ENCODE measurements at regions of chr19 and their contacts with region 1.

Region 1: GRCh38 chr19:17841810-17842662 is 5.7 kb downstream of the JAK3 start:
- DNase-seq: peak; percentile 99
- ATAC-seq: peak; percentile 92
- H3K4me3 Mint-ChIP-seq: peak overlapping the region; percentile 87
- H3K27ac Mint-ChIP-seq: no peak overlapping the region
- H3K4me1 Mint-ChIP-seq: peaks cover 4% of the 10 kb centered on the region
- H3K27me3 Mint-ChIP-seq: peaks cover 63% of the 10 kb centered on the region
- CTCF ChIP-seq: no peak

Region 2: DNA sequence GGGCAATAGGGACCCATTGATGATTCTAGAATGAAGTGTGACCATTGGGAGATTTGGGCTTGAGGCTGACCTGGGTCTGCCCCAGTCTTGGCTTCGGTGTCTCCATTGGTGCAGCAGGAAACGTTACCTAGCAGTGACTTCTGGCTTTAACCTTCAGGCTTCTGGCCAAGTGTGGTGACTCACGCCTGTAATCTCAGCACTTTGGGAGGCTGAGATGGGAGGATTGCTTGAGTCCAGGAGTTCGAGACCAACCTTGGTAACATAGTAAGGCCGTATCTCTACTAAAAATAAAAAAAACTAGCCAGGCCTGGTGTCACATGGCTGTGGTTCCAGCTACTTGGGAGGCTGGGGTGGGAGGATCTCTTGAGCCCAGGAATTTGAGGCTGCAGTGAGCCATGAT is 83.5 kb before region 1 on chr19:
- CTCF ChIA-PET with region 1: no interaction called
- POLR2A ChIA-PET with region 1: no interaction called
- DNase-seq: no peak
- ATAC-seq: no peak
- H3K4me3 Mint-ChIP-seq: no peak overlapping the region
- H3K27ac Mint-ChIP-seq: no peak overlapping the region
- H3K4me1 Mint-ChIP-seq: peaks cover 23% of the 10 kb centered on the region
- H3K27me3 Mint-ChIP-seq: no peaks in the 10 kb centered on the region; the same call in 1 of the 2 replicates
- CTCF ChIP-seq: no peak

Region 3: DNA sequence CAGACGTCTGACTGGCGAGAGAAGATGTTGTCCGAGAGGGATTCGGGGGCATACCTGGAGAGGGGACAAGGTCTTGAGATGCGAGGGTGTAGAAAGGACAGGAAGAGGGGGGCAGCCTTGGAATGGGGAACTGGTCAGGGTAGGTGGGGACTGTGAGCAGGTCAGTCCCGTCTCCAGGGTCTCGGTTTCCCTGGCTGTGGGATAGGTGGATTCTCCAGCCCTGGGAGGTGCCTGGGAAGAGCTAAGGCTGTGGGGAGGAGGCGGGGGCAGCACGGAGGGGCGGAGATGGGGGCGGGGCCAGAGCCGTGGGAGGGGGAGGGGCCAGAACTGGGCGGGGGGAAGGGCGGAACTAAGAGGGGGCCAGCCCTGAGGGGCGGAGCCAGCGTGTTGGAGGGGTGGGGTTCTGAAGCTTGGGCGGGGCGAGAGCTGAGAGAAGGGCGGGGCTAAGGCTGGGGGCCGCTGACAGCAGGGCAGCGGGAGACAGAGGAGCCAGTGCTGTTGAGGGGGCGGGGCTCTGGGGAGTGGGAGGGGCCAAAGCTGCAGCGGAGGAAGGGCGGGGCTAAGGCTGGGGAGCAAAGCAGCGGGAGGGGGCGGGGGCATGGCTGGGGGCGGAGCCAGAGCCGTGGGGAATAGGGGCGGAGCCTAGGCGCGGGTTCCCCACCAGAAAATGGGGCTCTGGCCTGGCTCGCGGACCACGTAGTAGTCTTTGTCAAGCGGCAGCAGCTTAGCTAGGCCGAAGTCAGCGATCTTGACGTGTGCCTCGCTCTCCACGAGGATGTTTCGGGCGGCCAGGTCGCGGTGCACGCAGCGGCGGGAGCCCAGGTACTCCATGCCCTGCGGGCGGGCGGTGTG is 11.2 kb before region 1 on chr19:
- CTCF ChIA-PET with region 1: interaction called, 8 read pairs
- POLR2A ChIA-PET with region 1: interaction called, 11 read pairs
- DNase-seq: peak; percentile 98
- ATAC-seq: peak; percentile 84
- H3K4me3 Mint-ChIP-seq: peak overlapping the region; percentile 83
- H3K27ac Mint-ChIP-seq: peak overlapping the region; percentile 99
- H3K4me1 Mint-ChIP-seq: peaks cover 26% of the 10 kb centered on the region
- H3K27me3 Mint-ChIP-seq: peaks cover 20% of the 10 kb centered on the region
- CTCF ChIP-seq: no peak